Panc1 (cell line): ENCODE measurements at regions of chr20 and their contacts with region 1.

Region 1: GRCh38 chr20:48620519-48621254 is 207.1 kb downstream of the PREX1 start:
- DNase-seq: peak; percentile 67
- ATAC-seq: peak; percentile 93
- H3K4me3 ChIP-seq: peak overlapping the region; percentile 18 to 42; a peak in 3 of 4 replicates
- H3K27ac ChIP-seq: no peak overlapping the region
- H3K4me1 ChIP-seq: peaks cover 10% of the 10 kb centered on the region; the same call in 1 of the 2 replicates
- H3K27me3 ChIP-seq: no peaks in the 10 kb centered on the region; the same call in 1 of the 2 replicates
- CTCF ChIP-seq: peak; percentile 96

Region 2: DNA sequence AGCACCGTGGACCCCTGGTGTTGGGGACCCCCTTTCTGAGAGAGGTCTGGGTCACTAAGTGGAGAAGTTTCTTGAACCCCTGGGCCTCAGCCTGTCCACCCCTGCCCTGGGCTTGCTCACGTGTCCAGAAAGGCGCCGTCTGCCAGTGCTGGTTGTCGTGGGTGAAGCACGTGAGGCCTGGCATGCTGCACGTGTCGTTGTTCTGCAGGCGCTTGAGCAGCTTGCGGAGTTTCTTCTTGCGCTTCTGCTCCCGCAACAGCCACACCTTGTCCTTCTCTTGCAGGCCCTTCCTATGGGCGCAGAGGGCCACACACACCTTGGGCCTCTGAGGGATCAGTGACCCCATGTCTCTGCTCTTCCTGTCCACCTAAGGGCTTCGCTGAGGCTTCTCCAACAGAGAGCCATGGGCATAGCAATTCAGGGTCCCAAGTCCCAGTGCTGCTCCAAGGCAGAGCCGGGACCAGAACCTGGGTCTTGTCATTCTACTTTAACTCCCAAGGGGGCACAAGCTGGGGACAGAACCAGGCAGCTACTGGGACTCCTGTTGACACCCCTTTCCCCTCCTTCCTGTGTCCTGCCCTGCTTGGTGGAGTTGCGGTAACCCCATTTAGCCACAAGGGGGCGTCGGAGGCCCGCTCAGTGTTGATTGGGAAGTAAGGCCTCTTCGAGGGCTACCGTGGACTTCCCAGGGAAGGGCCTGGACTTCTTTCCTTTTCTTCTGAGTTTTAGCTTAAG is 957.2 kb before region 1 on chr20:
- CTCF ChIA-PET with region 1: interaction called, 3 read pairs
- POLR2A ChIA-PET with region 1: no interaction called
- in situ Hi-C with region 1: no loop called
- intact Hi-C with region 1: loop called (anchors 5 kb)
- DNase-seq: peak; percentile 50
- ATAC-seq: peak; percentile 86
- H3K4me3 ChIP-seq: no peak overlapping the region
- H3K27ac ChIP-seq: no peak overlapping the region
- H3K4me1 ChIP-seq: peaks cover 3% of the 10 kb centered on the region; the same call in 1 of the 2 replicates
- H3K27me3 ChIP-seq: no peaks in the 10 kb centered on the region
- CTCF ChIP-seq: peak; percentile 98

Region 3: DNA sequence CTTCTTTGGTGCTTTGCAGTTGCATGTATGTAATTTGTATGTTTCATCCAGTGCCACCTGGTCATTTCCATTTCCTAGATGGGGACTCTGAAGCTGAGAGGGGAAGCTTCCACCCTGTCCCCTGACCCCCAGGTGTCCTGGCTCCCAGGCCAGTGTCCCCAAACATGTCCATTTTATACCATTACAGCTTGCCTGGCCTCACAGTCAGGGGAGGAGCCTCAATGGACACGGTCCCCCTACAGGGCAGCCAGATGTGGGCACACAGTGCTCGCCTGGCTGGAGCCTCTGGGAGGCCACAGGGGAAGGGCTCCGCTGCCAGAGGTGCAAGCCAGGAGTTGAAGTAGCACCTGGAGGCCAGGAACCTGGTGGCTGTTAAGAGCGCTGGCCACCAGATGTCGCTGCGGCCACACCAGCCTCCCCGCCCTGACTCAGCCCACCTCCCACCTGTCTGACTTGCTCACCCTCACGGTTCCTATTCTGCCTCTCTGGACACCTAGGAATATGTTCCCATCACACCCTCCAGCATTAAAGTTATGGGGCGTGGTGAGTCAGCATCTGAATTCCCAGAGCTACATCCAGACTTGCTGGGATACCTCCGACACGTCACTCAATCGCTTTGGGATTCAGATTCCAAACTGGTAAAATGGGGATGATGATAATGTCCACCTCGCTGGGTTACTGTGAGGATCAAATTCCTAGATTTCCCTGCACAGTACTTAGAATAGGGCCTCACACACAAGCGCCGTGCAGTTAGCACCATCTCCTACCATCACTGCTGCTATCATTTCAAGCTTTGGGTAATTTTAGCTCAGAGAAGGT is 942.8 kb before region 1 on chr20:
- CTCF ChIA-PET with region 1: interaction called, 7 read pairs
- POLR2A ChIA-PET with region 1: no interaction called
- in situ Hi-C with region 1: no loop called
- intact Hi-C with region 1: loop called (anchors 5 kb)
- DNase-seq: peak; percentile 22
- ATAC-seq: peak; percentile 88
- H3K4me3 ChIP-seq: no peak overlapping the region
- H3K27ac ChIP-seq: no peak overlapping the region
- H3K4me1 ChIP-seq: no peaks in the 10 kb centered on the region
- H3K27me3 ChIP-seq: no peaks in the 10 kb centered on the region
- CTCF ChIP-seq: peak; percentile 95

Region 4: DNA sequence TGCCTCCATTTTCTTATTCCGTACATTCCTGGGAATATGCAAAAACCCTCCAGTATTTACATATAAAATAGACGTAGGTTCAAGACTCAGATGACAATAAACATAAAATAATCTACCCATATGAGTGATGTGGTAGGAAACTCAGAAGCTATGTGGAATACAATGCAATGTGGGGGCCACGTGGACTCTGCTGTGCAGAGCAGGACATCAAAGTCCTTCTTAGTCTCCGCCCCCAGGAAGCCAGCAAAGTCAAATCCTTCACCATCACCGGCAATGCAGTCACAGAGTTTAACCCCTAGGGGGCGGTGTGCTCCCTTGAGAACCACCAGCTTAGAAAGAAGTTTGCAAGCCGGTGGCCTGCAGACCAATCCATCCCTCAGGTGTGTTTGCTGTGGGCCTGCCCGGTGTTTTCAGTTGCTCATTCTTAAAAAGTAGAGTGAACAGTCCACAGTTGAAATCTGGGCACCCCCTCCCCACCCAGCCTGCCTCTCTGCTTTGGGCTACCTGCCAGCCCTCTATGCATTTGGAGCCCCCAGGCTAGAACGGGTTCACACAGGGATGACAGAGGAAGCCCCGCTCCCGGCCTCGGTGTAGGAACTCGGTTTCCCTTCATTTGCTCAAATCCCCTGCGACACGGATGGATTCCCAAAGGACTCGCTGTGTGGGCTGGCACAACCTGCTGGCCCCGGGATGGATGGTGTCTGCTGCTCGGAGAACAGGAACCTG is 895.3 kb before region 1 on chr20:
- CTCF ChIA-PET with region 1: no interaction called
- POLR2A ChIA-PET with region 1: no interaction called
- in situ Hi-C with region 1: no loop called
- intact Hi-C with region 1: loop called (anchors 5 kb)
- DNase-seq: peak; percentile 64
- ATAC-seq: peak; percentile 86
- H3K4me3 ChIP-seq: no peak overlapping the region
- H3K27ac ChIP-seq: no peak overlapping the region
- H3K4me1 ChIP-seq: no peaks in the 10 kb centered on the region
- H3K27me3 ChIP-seq: no peaks in the 10 kb centered on the region
- CTCF ChIP-seq: peak; percentile 94

Region 5: DNA sequence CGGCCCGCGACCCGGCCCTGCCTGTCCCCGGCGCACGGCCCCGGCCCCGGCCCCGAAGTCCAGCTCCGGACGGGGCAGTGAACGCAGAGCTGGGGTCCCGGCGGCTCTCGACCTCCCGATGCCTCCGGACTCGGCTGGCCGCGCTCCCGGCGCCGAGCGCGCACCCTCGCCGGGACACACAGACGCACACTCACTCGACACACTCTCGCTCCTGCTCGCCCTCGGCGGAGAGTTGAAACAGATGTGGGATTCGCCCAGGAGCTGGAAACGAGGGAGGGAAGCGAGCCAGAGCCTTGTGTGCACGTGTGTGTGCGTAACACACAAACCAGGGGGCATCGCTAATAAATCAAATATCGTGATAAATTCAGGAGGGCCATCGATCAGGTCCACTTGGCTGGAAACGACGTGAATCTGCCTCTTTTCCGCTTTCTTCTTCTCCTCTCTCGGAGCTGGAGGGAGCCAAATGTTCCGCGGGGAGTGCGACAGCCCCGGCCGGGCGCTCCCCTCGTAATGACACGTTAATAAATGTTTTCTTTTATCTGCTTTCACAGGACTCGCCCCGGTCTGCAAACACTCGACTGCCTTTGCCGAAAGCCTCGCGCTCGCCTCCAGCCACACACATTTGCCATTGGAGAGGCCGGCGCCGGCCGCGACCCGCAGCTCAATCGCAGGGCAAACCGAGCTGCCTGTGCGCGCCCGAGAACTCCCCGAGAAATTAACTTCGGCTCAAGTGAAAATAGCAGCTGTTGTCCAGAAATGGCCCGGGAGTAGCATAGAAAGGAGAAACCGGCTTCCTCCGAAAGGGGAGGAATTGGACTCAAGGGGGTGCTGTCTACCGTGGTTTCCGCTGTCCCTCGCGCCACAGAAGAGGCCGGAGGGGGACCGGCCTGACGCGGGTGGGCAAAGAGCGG is 834.6 kb before region 1 on chr20:
- CTCF ChIA-PET with region 1: interaction called, 6 read pairs
- POLR2A ChIA-PET with region 1: no interaction called
- in situ Hi-C with region 1: no loop called
- intact Hi-C with region 1: loop called (anchors 5 kb)
- DNase-seq: no peak
- ATAC-seq: peak; percentile 87
- H3K4me3 ChIP-seq: peak overlapping the region; percentile 42 to 53
- H3K27ac ChIP-seq: no peak overlapping the region
- H3K4me1 ChIP-seq: no peaks in the 10 kb centered on the region
- H3K27me3 ChIP-seq: peaks cover 13% of the 10 kb centered on the region
- CTCF ChIP-seq: peak; percentile 87

Region 6: GRCh38 chr20:48411141-48411618 is 209.5 kb before region 1 on chr20:
- CTCF ChIA-PET with region 1: no interaction called
- POLR2A ChIA-PET with region 1: no interaction called
- in situ Hi-C with region 1: no loop called
- intact Hi-C with region 1: loop called (anchors 10 kb)
- DNase-seq: no peak
- ATAC-seq: no peak
- H3K4me3 ChIP-seq: no peak overlapping the region
- H3K27ac ChIP-seq: no peak overlapping the region
- H3K4me1 ChIP-seq: no peaks in the 10 kb centered on the region
- H3K27me3 ChIP-seq: peaks cover 10% of the 10 kb centered on the region
- CTCF ChIP-seq: no peak

Region 7: DNA sequence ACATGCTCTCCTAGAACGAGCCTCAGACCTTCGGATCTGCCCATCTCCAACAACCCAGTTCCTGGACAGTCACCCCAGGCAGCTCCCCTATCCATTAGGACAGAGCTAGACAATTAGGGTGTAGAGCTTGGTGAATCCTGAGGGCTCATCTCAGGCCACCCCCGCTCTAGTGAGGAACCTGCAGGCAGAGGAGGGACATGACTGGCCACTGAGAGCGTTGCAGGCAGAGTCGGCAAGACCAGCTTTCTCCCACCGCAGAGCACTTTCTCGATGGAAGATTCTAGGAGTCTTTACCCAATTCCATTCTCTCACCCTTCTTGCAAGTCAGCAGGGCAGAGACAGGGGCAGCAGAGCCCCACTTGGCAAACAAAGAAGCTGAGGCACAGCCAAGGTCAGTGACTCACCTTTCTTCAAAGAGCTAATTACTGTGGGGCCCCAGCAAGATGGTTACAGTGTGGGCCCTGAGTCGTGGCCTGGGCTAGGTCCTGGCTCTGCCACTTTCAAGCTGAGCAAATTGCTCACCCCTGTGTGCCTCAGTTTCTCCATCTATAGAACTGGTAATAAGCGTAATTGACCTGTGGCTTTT is 70.0 kb before region 1 on chr20:
- CTCF ChIA-PET with region 1: no interaction called
- POLR2A ChIA-PET with region 1: no interaction called
- in situ Hi-C with region 1: no loop called
- intact Hi-C with region 1: no loop called
- DNase-seq: no peak
- ATAC-seq: no peak
- H3K4me3 ChIP-seq: no peak overlapping the region
- H3K27ac ChIP-seq: no peak overlapping the region
- H3K4me1 ChIP-seq: no peaks in the 10 kb centered on the region
- H3K27me3 ChIP-seq: peaks cover 3% of the 10 kb centered on the region; the same call in 1 of the 2 replicates
- CTCF ChIP-seq: no peak